Caco-2 (cell line): ENCODE measurements at regions of chr10 and their contacts with region 1.

Region 1: DNA sequence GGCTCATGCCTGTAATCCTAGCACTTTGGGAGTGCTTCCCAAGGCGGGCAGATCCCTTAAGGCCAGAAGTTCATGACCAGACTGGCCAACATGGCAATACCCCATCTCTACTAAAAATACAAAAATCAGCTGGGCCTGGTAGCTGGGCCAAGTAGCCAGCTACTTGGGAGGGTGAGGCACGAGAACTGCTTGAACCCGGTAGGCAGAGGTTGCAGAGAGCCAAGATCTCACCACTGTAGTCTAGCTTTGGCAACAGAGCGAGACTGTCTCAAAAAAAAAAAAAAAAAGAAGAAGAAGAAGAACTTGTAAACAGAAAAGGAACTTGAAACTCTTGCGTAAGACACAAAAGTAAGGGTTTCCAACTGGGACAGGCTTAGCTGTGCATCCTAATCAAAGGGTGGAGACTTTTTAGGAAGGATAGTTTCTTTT is 5.6 kb upstream of the IFIT2 start:
- DNase-seq: no peak
- H3K4me3 ChIP-seq: no peak overlapping the region
- H3K4me3 Mint-ChIP-seq: no peak overlapping the region
- H3K27ac Mint-ChIP-seq: no peak overlapping the region
- H3K4me1 ChIP-seq: peaks cover 9% of the 10 kb centered on the region
- H3K4me1 Mint-ChIP-seq: no peaks in the 10 kb centered on the region
- H3K27me3 ChIP-seq: no peaks in the 10 kb centered on the region
- H3K27me3 Mint-ChIP-seq: no peaks in the 10 kb centered on the region
- CTCF ChIP-seq: no peak

Region 2: GRCh38 chr10:89369156-89370105 is 73.2 kb after region 1 on chr10:
- CTCF ChIA-PET with region 1: interaction called, 4 read pairs
- POLR2A ChIA-PET with region 1: no interaction called
- intact Hi-C with region 1: loop called (anchors 1 kb)
- DNase-seq: no peak
- H3K4me3 ChIP-seq: no peak overlapping the region
- H3K4me3 Mint-ChIP-seq: no peak overlapping the region
- H3K27ac Mint-ChIP-seq: no peak overlapping the region
- H3K4me1 ChIP-seq: peaks cover 25% of the 10 kb centered on the region
- H3K4me1 Mint-ChIP-seq: peaks cover 20% of the 10 kb centered on the region
- H3K27me3 ChIP-seq: no peaks in the 10 kb centered on the region
- H3K27me3 Mint-ChIP-seq: no peaks in the 10 kb centered on the region
- CTCF ChIP-seq: peak; percentile 53 to 54